OCI-LY7 (cell line): ENCODE measurements at regions of chr16 and their contacts with region 1.

Region 1: GRCh38 chr16:3059000-3059722 is 6.3 kb upstream of the IL32 start:
- DNase-seq: peak; percentile 92
- H3K4me3 ChIP-seq: peak overlapping the region; percentile 76
- H3K27ac ChIP-seq: peak overlapping the region; percentile 39
- H3K4me1 ChIP-seq: peaks cover 31% of the 10 kb centered on the region
- CTCF ChIP-seq: peak; percentile 79

Region 2: GRCh38 chr16:3003582-3004302 is 55.4 kb before region 1 on chr16:
- CTCF ChIA-PET with region 1: no interaction called
- POLR2A ChIA-PET with region 1: no interaction called
- intact Hi-C with region 1: loop called (anchors 2 kb)
- DNase-seq: peak; percentile 99
- H3K4me3 ChIP-seq: peak overlapping the region; percentile 15
- H3K27ac ChIP-seq: no peak overlapping the region
- H3K4me1 ChIP-seq: peaks cover 23% of the 10 kb centered on the region
- CTCF ChIP-seq: peak; percentile 82

Region 3: GRCh38 chr16:3074860-3075522 is 15.8 kb after region 1 on chr16:
- CTCF ChIA-PET with region 1: no interaction called
- POLR2A ChIA-PET with region 1: interaction called, 3 read pairs
- intact Hi-C with region 1: loop called (anchors 1 kb)
- DNase-seq: peak; percentile 83
- H3K4me3 ChIP-seq: peak overlapping the region; percentile 29
- H3K27ac ChIP-seq: peak overlapping the region; percentile 37
- H3K4me1 ChIP-seq: peaks cover 22% of the 10 kb centered on the region
- CTCF ChIP-seq: no peak

Region 4: GRCh38 chr16:3123986-3124886 is 65.1 kb after region 1 on chr16:
- CTCF ChIA-PET with region 1: interaction called, 11 read pairs
- POLR2A ChIA-PET with region 1: no interaction called
- intact Hi-C with region 1: loop called (anchors 1 kb)
- DNase-seq: peak; percentile 97
- H3K4me3 ChIP-seq: peak overlapping the region; percentile 72
- H3K27ac ChIP-seq: peak overlapping the region; percentile 41
- H3K4me1 ChIP-seq: peaks cover 19% of the 10 kb centered on the region
- CTCF ChIP-seq: 0 out of 2 replicates have a peak, but pooled peaks have one; percentile 37

Region 5: GRCh38 chr16:3166510-3166895 is 107.3 kb after region 1 on chr16:
- CTCF ChIA-PET with region 1: no interaction called
- POLR2A ChIA-PET with region 1: no interaction called
- intact Hi-C with region 1: loop called (anchors 2 kb)
- DNase-seq: no peak
- H3K4me3 ChIP-seq: no peak overlapping the region
- H3K27ac ChIP-seq: no peak overlapping the region
- H3K4me1 ChIP-seq: peaks cover 7% of the 10 kb centered on the region
- CTCF ChIP-seq: no peak